ENCODE measurements at regions of chr6 and their contacts with region 1.

Region 1: DNA sequence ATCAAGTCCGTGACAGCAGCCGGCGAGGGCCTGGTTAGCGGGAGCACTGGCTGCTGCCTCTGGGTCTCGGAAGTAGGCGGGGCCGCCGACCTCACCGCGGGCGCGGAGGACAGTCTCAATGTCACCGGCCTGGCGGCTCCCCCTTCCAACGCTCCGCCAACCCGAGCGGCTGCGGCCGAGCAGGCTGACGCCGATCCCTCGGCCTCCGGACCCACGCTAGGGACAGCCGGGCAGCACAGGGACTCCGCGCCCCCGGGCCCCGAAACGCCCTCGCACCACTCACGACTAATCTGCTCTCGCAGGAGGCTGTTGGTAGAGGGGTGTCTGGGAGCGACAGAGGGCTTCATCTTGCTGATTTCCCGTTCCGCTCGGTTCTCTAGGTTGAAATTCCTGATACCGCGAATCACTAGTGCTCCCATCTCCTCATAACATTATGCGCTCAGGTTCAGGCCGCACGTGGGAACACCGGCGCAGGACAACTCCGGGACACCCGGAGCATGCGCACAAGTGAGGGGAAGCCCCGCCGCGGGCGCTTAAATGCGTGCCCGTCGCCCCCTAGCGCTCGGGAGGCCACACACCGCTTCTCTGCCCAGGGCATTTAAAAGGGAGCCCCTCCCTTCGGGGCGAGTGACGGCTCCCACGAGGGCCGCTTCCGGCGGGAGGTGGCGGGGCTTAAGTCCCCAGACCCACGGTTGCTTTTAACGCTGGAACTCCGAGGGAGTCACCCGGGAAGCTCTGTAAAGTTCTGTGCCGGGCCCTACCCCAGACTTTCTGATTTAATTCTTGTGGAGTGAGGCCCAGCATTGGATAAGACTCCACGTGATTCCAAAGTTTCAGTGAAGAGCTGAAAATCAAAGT is at the start of gene NDUFAF4:
- DNase-seq: peak; percentile 97
- total RNA-seq, gene NDUFAF4: 103 TPM

Region 2: DNA sequence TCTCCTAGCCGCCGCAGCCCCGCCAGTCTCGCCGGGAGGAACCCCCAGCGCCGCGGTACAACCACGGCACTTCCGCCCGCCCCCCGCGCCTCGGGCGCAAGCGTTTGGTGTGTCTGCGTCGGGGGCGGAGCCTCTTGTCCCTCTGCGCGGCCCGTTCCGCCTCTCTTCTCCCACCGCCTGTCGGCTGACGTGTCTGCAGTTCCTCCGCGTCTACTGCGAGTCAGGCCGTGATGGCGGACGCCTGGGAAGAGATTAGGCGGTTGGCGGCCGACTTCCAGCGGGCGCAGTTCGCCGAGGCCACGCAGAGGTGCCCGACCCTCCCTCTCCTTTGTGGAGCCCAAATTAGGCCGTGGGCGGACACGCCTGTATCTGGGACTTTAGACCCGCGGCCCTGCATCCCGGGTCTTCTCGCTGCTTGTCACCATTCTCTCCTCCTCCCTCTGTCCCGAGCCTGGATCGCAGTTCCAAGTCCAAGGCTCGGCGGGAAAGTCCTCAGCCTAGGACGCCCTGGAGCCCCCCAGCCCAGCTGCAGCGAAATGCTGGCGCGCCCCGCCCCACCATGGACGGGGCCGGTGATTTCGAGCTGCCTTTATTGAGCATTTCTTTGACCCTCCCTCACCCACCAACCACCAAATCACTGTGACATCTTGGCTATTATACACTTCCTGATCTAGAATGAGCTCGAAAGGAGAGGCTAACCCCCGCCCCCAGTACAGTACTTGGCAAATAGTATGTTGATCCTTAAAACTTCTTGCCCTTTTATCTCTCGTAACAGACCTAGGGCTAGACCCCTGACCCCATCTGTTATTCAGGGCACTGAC is 375.8 kb before region 1 on chr6 and contains the start of gene UFL1:
- intact Hi-C with region 1: loop called (anchors 5 kb)
- DNase-seq: peak; percentile 98
- total RNA-seq, gene UFL1: 25.2 TPM

Region 3: GRCh38 chr6:96626759-96627364 is 270.8 kb before region 1 on chr6:
- intact Hi-C with region 1: loop called (anchors 5 kb)
- DNase-seq: no peak

Region 4: GRCh38 chr6:96837081-96837971 is 60.3 kb before region 1 on chr6 and contains the start of gene GPR63:
- intact Hi-C with region 1: loop called (anchors 5 kb)
- DNase-seq: peak; percentile 79
- total RNA-seq, gene GPR63: 1.8 TPM

Region 5: DNA sequence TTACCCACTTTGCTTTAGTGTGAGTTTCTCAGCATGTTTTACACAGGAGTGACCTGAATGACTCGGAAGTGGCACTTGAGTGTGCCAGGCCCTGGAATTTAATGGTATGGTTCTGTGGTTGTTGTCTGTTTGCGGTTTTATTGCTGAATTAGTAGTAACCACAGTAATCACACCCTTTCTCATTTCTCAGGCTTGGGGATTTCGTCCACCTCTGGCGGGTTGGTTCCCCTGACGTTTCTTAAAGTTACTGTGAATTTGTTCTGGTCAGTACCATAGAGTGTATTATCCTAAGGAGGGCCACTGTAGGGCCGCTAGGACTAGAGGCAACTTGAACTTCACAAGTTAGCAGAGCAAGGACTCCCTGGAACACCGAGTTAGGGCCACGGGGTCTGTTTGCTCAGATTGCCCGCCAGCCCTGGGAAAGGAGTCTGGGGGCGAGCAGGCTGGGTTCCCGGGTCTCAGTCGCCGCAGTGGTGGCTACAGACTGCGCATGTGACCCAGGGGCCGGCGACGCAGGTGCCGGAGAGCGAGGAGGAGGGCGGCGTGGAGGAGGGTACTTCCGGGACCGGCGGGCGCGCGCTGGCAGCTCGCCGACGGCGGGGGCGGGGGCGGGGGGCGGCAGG is 26.4 kb after region 1 on chr6:
- intact Hi-C with region 1: loop called (anchors 2 kb)
- DNase-seq: no peak

Region 6: GRCh38 chr6:97059473-97059872 is 161.9 kb after region 1 on chr6:
- intact Hi-C with region 1: loop called (anchors 5 kb)
- DNase-seq: no peak